Activated CD4-positive, alpha-beta memory T cell treated with anti-CD3 and anti-CD28 coated beads for 36 hours (primary cell): ENCODE measurements at regions of chr16 and their contacts with region 1.

Region 1: GRCh38 chr16:68520649-68521086 is 18.4 kb upstream of the ZFP90 start:
- DNase-seq: peak; percentile 92
- H3K4me3 Mint-ChIP-seq: no peak overlapping the region
- H3K27ac Mint-ChIP-seq: no peak overlapping the region
- H3K4me1 Mint-ChIP-seq: peaks cover 6% of the 10 kb centered on the region
- H3K27me3 Mint-ChIP-seq: peaks cover 1% of the 10 kb centered on the region

Region 2: DNA sequence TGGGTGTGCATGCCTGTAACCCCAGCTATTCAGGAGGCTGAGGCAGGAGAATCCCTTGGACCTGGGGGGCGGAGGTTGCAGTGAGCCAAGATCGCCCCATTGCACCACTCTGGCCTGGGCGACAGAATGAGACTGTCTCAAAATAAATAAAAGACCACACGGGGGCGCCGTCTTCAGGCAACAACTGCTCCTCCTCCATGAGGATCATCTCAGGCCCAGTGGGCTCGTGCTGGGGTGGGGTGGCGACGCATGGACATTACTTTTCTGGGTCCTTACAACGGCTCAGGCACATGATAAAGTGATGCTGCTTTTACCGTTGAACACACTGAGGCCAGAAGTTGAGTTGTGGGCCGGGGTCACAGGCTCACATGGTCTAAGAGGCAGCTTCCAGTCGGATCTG is 153.6 kb before region 1 on chr16:
- CTCF ChIA-PET with region 1: interaction called, 12 read pairs
- POLR2A ChIA-PET with region 1: no interaction called
- intact Hi-C with region 1: no loop called
- DNase-seq: peak; percentile 57
- H3K4me3 Mint-ChIP-seq: no peak overlapping the region
- H3K27ac Mint-ChIP-seq: no peak overlapping the region
- H3K4me1 Mint-ChIP-seq: peaks cover 32% of the 10 kb centered on the region
- H3K27me3 Mint-ChIP-seq: peaks cover 10% of the 10 kb centered on the region

Region 3: GRCh38 chr16:68396481-68396880 is 124.2 kb before region 1 on chr16:
- CTCF ChIA-PET with region 1: interaction called, 32 read pairs
- POLR2A ChIA-PET with region 1: no interaction called
- intact Hi-C with region 1: no loop called
- DNase-seq: peak; percentile 63
- H3K4me3 Mint-ChIP-seq: no peak overlapping the region
- H3K27ac Mint-ChIP-seq: no peak overlapping the region
- H3K4me1 Mint-ChIP-seq: peaks cover 16% of the 10 kb centered on the region
- H3K27me3 Mint-ChIP-seq: no peaks in the 10 kb centered on the region